Activated CD4-positive, alpha-beta memory T cell treated with anti-CD3 and anti-CD28 coated beads for 36 hours (primary cell): ENCODE measurements at regions of chr6 and their contacts with region 1.

Region 1: GRCh38 chr6:53171605-53172446 is 23.2 kb upstream of the GCM1 start:
- DNase-seq: peak; percentile 92
- H3K4me3 Mint-ChIP-seq: no peak overlapping the region
- H3K27ac Mint-ChIP-seq: no peak overlapping the region
- H3K4me1 Mint-ChIP-seq: no peaks in the 10 kb centered on the region
- H3K27me3 Mint-ChIP-seq: no peaks in the 10 kb centered on the region

Region 2: DNA sequence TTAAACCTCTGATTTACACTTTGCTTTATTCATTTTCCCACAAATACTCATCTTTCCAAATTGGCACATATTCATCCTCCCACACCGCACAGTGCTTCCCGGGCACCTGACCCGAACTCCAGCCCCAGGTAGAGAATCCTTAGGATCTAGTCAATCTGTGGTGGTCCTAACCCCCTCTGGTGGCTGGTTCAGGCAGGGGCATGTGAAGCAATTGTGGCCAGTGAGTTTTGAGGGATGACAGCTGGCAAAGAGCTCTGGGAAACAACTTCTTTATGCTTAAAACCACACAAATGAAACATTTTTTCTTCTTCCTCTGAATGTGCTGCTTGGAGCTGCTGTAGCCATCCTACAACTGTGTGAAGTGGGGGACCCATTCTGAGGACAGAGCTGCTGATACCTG is 122.3 kb after region 1 on chr6:
- CTCF ChIA-PET with region 1: interaction called, 6 read pairs
- POLR2A ChIA-PET with region 1: no interaction called
- intact Hi-C with region 1: loop called (anchors 5 kb)
- DNase-seq: no peak
- H3K4me3 Mint-ChIP-seq: no peak overlapping the region
- H3K27ac Mint-ChIP-seq: no peak overlapping the region
- H3K4me1 Mint-ChIP-seq: peaks cover 77% of the 10 kb centered on the region
- H3K27me3 Mint-ChIP-seq: no peaks in the 10 kb centered on the region

Region 3: DNA sequence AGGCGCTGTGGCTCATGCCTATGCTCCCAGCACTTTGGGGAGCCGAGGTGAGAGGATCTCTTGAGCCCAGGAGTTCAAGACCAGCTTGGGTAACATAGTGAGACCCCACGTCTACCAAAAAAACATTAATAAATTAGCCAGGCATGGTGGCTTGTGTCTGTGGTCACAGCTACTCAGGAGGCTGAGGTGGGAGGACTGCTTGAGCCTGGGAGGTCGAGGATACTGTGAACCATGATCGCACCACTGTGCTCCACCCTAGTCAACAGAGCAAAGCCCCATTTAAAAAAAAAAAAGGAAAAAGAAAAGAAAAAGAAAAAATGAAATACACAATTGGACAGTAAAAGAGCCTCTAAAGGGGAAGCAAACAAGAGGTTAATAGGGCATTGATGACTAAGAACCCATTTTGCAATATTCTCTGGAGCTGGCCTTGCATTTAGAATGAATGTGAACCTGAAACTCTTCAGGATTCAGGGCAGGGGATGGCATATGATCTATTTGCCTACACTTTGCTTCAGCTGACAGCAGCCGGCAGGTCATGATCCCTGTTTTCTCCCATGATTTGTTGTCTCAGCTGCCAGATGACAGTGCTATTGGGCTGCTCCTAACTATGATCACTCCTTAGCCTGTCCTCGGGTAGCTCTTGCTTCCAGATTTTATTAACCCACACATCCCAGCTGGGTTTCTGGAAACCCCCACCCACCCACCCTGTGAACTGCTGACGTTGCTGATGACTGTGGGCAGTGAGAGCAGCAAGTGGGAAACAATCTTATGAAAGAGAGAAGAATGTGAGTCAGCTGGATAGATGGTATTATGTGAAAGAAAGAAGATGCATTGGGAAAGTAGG is 260.7 kb after region 1 on chr6:
- CTCF ChIA-PET with region 1: interaction called, 13 read pairs
- POLR2A ChIA-PET with region 1: no interaction called
- intact Hi-C with region 1: loop called (anchors 1 kb)
- DNase-seq: no peak
- H3K4me3 Mint-ChIP-seq: no peak overlapping the region
- H3K27ac Mint-ChIP-seq: no peak overlapping the region
- H3K4me1 Mint-ChIP-seq: peaks cover 34% of the 10 kb centered on the region
- H3K27me3 Mint-ChIP-seq: no peaks in the 10 kb centered on the region

Region 4: GRCh38 chr6:53484476-53485280 is 312.9 kb after region 1 on chr6:
- CTCF ChIA-PET with region 1: interaction called, 140 read pairs
- POLR2A ChIA-PET with region 1: no interaction called
- intact Hi-C with region 1: loop called (anchors 1 kb)
- DNase-seq: peak; percentile 68
- H3K4me3 Mint-ChIP-seq: no peak overlapping the region
- H3K27ac Mint-ChIP-seq: no peak overlapping the region
- H3K4me1 Mint-ChIP-seq: peaks cover 9% of the 10 kb centered on the region
- H3K27me3 Mint-ChIP-seq: peaks cover 28% of the 10 kb centered on the region

Region 5: GRCh38 chr6:53725791-53726431 is 554.1 kb after region 1 on chr6:
- CTCF ChIA-PET with region 1: interaction called, 12 read pairs
- POLR2A ChIA-PET with region 1: no interaction called
- intact Hi-C with region 1: loop called (anchors 2 kb)
- DNase-seq: peak; percentile 82
- H3K4me3 Mint-ChIP-seq: no peak overlapping the region
- H3K27ac Mint-ChIP-seq: no peak overlapping the region
- H3K4me1 Mint-ChIP-seq: peaks cover 8% of the 10 kb centered on the region
- H3K27me3 Mint-ChIP-seq: peaks cover 19% of the 10 kb centered on the region